ENCODE measurements at regions of chr4 and their contacts with region 1.

Region 1: DNA sequence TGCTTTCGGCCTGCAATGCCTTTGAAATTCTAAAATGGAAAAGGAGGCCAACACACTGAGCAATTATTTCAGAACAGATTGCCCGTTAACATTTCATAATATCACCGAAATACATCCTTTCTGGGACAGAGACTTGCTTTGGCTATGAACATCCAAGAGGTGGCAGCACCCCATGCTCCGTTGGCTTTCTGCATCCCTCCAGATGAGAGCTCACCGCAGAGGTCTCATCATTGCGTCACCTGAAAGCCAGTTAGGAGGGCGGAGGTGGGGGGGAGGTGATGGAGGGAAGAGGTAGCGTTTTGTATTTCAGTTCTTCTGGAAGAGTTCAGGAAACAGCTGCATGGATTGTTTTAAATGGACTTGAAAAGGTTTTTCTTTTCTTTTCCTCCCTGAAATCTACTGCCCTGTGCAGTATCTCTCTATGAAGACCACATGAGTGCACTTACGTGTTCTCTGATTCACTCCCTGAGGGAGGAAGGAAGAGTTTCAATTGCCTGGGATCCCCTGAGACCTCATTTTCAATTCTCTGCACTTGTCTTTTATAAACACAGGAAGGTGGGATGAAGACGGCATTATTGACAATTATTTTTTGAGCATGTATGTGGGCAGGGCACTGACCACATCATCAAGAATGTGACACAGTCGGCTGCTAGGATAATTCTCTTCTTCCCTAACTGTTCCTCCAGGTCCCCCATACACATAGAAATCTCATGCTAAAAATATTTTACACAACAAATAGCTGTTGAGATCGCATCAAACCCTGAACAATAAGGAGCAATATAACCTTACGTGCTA is 166.9 kb upstream of the PGRMC2 start:
- DNase-seq: peak; percentile 67
- ATAC-seq: peak; percentile 99
- H3K4me3 ChIP-seq: no peak overlapping the region
- H3K27ac ChIP-seq: no peak overlapping the region
- H3K4me1 ChIP-seq: no peaks in the 10 kb centered on the region
- H3K27me3 ChIP-seq: no peaks in the 10 kb centered on the region
- CTCF ChIP-seq: peak; percentile 82
- EP300 ChIP-seq: no peak
- POLR2A ChIP-seq: no peak
- RAD21 ChIP-seq: peak; percentile 66

Region 2: DNA sequence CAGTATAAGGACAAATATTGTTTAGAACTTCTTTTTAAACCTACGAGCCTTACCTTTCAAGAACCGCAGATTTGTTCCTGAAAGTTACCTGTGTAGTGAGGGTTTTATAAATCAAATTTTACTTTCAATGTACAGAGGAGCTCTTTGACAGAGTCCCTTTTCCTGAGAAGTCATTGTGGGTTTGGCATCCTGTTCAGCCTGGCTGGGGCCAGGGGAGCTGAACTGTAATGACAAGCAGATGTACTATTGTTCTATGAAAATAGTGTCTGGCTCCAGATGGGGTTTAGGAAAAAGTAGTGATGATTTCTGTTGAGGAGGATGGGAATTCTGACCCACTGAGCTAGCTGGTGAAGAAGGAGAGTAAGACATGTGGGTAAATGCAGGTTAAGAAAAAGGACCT is 29.3 kb after region 1 on chr4:
- CTCF ChIA-PET with region 1: no interaction called
- POLR2A ChIA-PET with region 1: no interaction called
- in situ Hi-C with region 1: no loop called
- intact Hi-C with region 1: no loop called
- DNase-seq: no peak
- ATAC-seq: no peak
- H3K4me3 ChIP-seq: no peak overlapping the region
- H3K27ac ChIP-seq: no peak overlapping the region
- H3K4me1 ChIP-seq: no peaks in the 10 kb centered on the region
- H3K27me3 ChIP-seq: no peaks in the 10 kb centered on the region
- CTCF ChIP-seq: no peak
- EP300 ChIP-seq: no peak
- POLR2A ChIP-seq: no peak
- RAD21 ChIP-seq: no peak

Region 3: GRCh38 chr4:128553686-128554515 is 99.4 kb after region 1 on chr4:
- CTCF ChIA-PET with region 1: no interaction called
- POLR2A ChIA-PET with region 1: no interaction called
- in situ Hi-C with region 1: no loop called
- intact Hi-C with region 1: loop called (anchors 5 kb)
- DNase-seq: no peak
- ATAC-seq: no peak
- H3K4me3 ChIP-seq: peak overlapping the region; percentile 52 to 87 (median 78); a peak in 5 of 6 replicates
- H3K27ac ChIP-seq: no peak overlapping the region
- H3K4me1 ChIP-seq: peaks cover 17% of the 10 kb centered on the region
- H3K27me3 ChIP-seq: peaks cover 0 to 8% of the 10 kb centered on the region in 2 experiments; a peak in 3 of 5 replicates
- CTCF ChIP-seq: no peak
- EP300 ChIP-seq: no peak
- POLR2A ChIP-seq: no peak
- RAD21 ChIP-seq: no peak

Region 4: GRCh38 chr4:128565565-128566186 is 111.2 kb after region 1 on chr4:
- CTCF ChIA-PET with region 1: no interaction called
- POLR2A ChIA-PET with region 1: no interaction called
- in situ Hi-C with region 1: no loop called
- intact Hi-C with region 1: loop called (anchors 1 kb)
- DNase-seq: peak; percentile 51
- ATAC-seq: peak; percentile 99
- H3K4me3 ChIP-seq: no peak overlapping the region
- H3K27ac ChIP-seq: no peak overlapping the region
- H3K4me1 ChIP-seq: peaks cover 8% of the 10 kb centered on the region; the same call in 1 of the 2 replicates
- H3K27me3 ChIP-seq: no peaks in the 10 kb centered on the region; a peak in 1 of 5 replicates
- CTCF ChIP-seq: peak; percentile 82
- EP300 ChIP-seq: no peak
- POLR2A ChIP-seq: no peak
- RAD21 ChIP-seq: peak; percentile 82

Region 5: GRCh38 chr4:128606173-128606572 is 151.7 kb after region 1 on chr4:
- CTCF ChIA-PET with region 1: no interaction called
- POLR2A ChIA-PET with region 1: no interaction called
- in situ Hi-C with region 1: no loop called
- intact Hi-C with region 1: no loop called
- DNase-seq: no peak
- ATAC-seq: no peak
- H3K4me3 ChIP-seq: no peak overlapping the region
- H3K27ac ChIP-seq: no peak overlapping the region
- H3K4me1 ChIP-seq: peaks cover 11% of the 10 kb centered on the region
- H3K27me3 ChIP-seq: no peaks in the 10 kb centered on the region
- CTCF ChIP-seq: no peak
- EP300 ChIP-seq: no peak
- POLR2A ChIP-seq: no peak
- RAD21 ChIP-seq: no peak

Region 6: GRCh38 chr4:128649575-128650205 is 195.2 kb after region 1 on chr4:
- CTCF ChIA-PET with region 1: no interaction called
- POLR2A ChIA-PET with region 1: no interaction called
- in situ Hi-C with region 1: no loop called
- intact Hi-C with region 1: loop called (anchors 10 kb)
- DNase-seq: peak; percentile 6
- ATAC-seq: peak; percentile 68
- H3K4me3 ChIP-seq: no peak overlapping the region
- H3K27ac ChIP-seq: no peak overlapping the region
- H3K4me1 ChIP-seq: peaks cover 12% of the 10 kb centered on the region
- H3K27me3 ChIP-seq: peaks cover 0 to 2% of the 10 kb centered on the region in 2 experiments; a peak in 1 of 5 replicates
- CTCF ChIP-seq: no peak
- EP300 ChIP-seq: no peak
- POLR2A ChIP-seq: no peak
- RAD21 ChIP-seq: no peak

Region 7: DNA sequence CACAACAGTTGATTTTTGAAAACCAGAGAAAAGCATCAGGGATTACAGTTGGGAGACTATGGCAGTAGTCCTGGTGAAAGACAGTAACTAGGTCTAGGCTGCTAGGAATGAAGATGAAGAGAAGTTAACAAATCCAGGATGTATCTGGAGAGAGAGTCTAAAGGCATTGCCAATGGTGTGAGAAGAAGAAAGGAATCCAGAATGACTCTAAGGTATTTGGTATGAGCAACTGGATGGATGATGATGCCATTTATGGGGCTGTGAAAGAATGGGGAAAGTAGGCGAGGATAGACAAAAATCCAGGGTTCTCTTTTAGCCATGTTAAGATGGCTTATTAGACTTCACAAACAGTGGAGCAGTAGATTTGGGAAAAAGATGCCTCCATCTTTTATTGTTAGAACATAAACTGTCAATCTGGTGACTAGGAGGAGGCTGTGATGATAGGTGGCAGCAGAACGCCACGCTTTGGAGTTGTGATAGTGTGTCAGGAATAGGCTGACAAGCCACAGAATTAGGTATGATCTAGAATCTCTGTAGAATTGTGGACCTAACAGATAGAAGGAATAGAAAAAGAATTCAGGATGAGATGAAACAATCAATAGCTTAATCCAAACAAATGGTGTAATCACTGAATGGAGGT is 327.7 kb after region 1 on chr4:
- CTCF ChIA-PET with region 1: no interaction called
- POLR2A ChIA-PET with region 1: no interaction called
- in situ Hi-C with region 1: no loop called
- intact Hi-C with region 1: no loop called
- DNase-seq: peak; percentile 28
- ATAC-seq: peak; percentile 91
- H3K4me3 ChIP-seq: no peak overlapping the region
- H3K27ac ChIP-seq: no peak overlapping the region
- H3K4me1 ChIP-seq: no peaks in the 10 kb centered on the region
- H3K27me3 ChIP-seq: no peaks in the 10 kb centered on the region
- CTCF ChIP-seq: peak; percentile 65
- EP300 ChIP-seq: no peak
- POLR2A ChIP-seq: no peak
- RAD21 ChIP-seq: 0 out of 2 replicates have a peak, but pooled peaks have one; percentile 16

Region 8: GRCh38 chr4:128793859-128794672 is 339.6 kb after region 1 on chr4:
- CTCF ChIA-PET with region 1: no interaction called
- POLR2A ChIA-PET with region 1: no interaction called
- in situ Hi-C with region 1: no loop called
- intact Hi-C with region 1: loop called (anchors 2 kb)
- DNase-seq: no peak
- ATAC-seq: peak; percentile 48; the same call in 1 of the 3 replicates
- H3K4me3 ChIP-seq: no peak overlapping the region
- H3K27ac ChIP-seq: no peak overlapping the region
- H3K4me1 ChIP-seq: peaks cover 6% of the 10 kb centered on the region; the same call in 1 of the 2 replicates
- H3K27me3 ChIP-seq: no peaks in the 10 kb centered on the region
- CTCF ChIP-seq: no peak
- EP300 ChIP-seq: no peak
- POLR2A ChIP-seq: no peak
- RAD21 ChIP-seq: no peak

Measured in HepG2 (cell line).